ENCODE measurements at regions of chr1 and their contacts with region 1.

Region 1: DNA sequence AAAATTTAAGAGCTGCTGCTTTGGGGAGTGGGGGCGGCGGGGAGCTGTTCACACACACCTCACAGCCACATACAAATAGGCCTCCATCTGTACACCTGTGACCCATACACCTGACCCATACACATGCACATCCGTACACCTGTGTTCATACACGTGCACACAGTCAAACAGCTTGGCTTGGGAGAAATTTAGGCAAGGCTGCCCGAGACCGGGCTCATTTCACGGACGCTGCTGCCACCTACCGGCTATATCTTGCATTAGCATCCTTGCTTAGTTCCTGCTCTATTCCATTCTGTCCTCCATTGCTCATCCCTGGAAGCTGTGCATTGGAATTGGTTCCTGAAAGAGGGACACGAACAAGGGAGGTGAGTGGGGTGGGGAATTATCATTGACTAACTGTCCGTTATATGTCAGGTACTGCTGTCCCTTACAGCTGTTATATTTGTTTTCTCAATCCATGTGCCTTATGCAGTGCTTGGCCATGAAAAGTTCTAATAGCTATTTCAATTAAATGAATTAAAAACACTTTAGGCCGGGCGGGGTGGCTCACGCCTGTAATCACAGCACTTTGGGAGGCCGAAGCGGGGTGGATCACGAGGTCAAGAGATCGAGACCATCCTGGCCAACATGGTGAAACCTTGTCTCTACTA is 37.1 kb upstream of the EPB41 start:
- DNase-seq: peak; percentile 55 to 76
- H3K4me3 ChIP-seq: no peak overlapping the region
- H3K27ac ChIP-seq: no peak overlapping the region
- H3K4me1 ChIP-seq: 0 out of 2 replicates have a peak, but pooled peaks cover 1% of the 10 kb centered on the region
- H3K27me3 ChIP-seq: no peaks in the 10 kb centered on the region
- CTCF ChIP-seq: peak; percentile 84

Region 2: GRCh38 chr1:27346991-27347627 is 1530.1 kb before region 1 on chr1:
- CTCF ChIA-PET with region 1: interaction called, 3 read pairs
- POLR2A ChIA-PET with region 1: interaction called, 11 read pairs
- intact Hi-C with region 1: no loop called
- DNase-seq: peak in 1 of 2 experiments; percentile 19
- H3K4me3 ChIP-seq: no peak overlapping the region
- H3K27ac ChIP-seq: no peak overlapping the region
- H3K4me1 ChIP-seq: peaks cover 11% of the 10 kb centered on the region
- H3K27me3 ChIP-seq: no peaks in the 10 kb centered on the region
- CTCF ChIP-seq: no peak

Region 3: GRCh38 chr1:28480308-28480707 is 396.9 kb before region 1 on chr1:
- CTCF ChIA-PET with region 1: no interaction called
- POLR2A ChIA-PET with region 1: interaction called, 21 read pairs
- intact Hi-C with region 1: no loop called
- DNase-seq: no peak
- H3K4me3 ChIP-seq: no peak overlapping the region
- H3K27ac ChIP-seq: 0 out of 2 replicates have a peak overlapping the region, but pooled peaks have one; percentile 41
- H3K4me1 ChIP-seq: 0 out of 2 replicates have a peak, but pooled peaks cover 6% of the 10 kb centered on the region
- H3K27me3 ChIP-seq: no peaks in the 10 kb centered on the region
- CTCF ChIP-seq: no peak

Region 4: DNA sequence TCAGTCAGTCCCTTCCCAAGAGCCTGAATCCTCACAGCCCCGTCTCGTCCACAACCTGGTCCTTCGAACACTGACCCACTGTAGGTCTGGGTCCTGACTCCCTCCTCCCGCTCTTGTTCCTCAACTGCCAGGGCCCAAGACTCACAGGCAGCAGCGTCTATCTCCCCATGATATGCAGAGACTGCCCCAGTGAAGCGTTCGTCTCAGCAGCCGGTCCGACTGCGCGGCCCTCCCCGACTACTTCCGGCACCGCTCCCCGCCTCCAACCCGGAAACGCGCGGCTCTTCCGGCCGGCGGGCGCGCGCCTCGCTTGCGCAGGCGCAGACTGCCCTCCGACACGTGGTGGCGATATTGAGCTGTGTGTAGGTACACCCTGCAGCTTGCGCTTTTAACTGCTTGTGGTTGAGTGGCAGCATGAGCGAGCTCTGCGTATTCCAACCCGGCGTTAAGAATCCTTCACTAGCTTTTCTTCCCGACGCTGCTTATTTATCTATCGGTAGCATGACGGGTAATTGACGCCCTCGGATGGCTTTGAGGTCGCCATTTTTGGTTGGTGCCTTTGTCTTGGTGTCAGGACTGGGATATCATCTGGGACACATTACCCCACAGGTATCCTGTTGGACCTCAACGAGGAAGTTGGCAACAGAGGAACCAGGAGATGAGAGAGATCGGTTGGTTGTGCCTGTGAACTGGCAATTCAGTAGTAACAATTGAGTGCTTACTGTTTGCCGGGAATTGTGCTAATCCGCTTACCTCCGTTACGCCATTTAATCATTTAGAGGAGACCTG is 234.2 kb before region 1 on chr1 and contains the start of gene TAF12:
- CTCF ChIA-PET with region 1: interaction called, 4 read pairs
- POLR2A ChIA-PET with region 1: no interaction called
- intact Hi-C with region 1: loop called (anchors 5 kb)
- DNase-seq: peak; percentile 81 to 85
- H3K4me3 ChIP-seq: peak within 1 kb of the TSS; percentile 91
- H3K27ac ChIP-seq: peak within 1 kb of the TSS; percentile 97
- H3K4me1 ChIP-seq: peaks cover 16% of the 10 kb centered on the region
- H3K27me3 ChIP-seq: no peaks in the 10 kb centered on the region
- CTCF ChIP-seq: no peak; the same call in 1 of the 2 replicates
- total RNA-seq, gene TAF12: 19.9 and 28.4 TPM in 2 replicates

Region 5: GRCh38 chr1:28796352-28797211 is 80.7 kb before region 1 on chr1:
- CTCF ChIA-PET with region 1: interaction called, 3 read pairs
- POLR2A ChIA-PET with region 1: interaction called, 19 read pairs
- intact Hi-C with region 1: no loop called
- DNase-seq: no peak
- H3K4me3 ChIP-seq: no peak overlapping the region
- H3K27ac ChIP-seq: no peak overlapping the region
- H3K4me1 ChIP-seq: peaks cover 12% of the 10 kb centered on the region
- H3K27me3 ChIP-seq: no peaks in the 10 kb centered on the region
- CTCF ChIP-seq: no peak